ENCODE measurements at regions of chr5 and their contacts with region 1.

Region 1: DNA sequence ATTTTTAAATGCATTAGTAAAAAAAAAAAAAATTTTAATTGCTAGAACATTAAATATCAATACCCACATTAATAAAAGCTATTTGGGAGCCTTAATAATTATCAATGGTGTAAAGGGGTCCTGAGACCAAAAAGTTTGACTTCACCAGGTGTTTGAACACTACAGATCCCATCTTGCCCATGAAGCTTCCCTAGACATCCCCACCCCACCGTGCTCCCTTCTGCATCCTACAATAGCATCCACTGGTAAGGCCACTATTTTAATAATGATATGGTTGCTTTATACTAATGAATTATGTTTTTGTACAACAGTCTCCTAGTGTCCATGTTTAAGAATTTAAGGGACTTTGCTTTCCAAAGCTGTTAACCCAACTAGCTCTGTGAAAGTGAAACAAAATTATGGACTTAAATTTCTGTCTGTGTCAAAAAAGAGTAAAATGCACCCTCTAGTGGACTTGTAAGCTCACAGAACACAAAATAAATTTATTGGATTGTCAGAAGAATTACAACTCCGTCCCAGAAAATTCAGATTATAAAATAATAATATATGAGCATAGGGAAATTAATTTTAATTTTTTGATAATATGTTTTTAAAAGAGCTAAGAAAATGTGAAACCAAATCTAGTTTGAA is 76.0 kb downstream of the ARL15 start:
- DNase-seq: no peak
- ATAC-seq: no peak
- H3K4me3 ChIP-seq: no peak overlapping the region
- H3K27ac ChIP-seq: no peak overlapping the region
- H3K4me1 ChIP-seq: no peaks in the 10 kb centered on the region
- H3K27me3 ChIP-seq: no peaks in the 10 kb centered on the region
- CTCF ChIP-seq: peak; percentile 67

Region 2: DNA sequence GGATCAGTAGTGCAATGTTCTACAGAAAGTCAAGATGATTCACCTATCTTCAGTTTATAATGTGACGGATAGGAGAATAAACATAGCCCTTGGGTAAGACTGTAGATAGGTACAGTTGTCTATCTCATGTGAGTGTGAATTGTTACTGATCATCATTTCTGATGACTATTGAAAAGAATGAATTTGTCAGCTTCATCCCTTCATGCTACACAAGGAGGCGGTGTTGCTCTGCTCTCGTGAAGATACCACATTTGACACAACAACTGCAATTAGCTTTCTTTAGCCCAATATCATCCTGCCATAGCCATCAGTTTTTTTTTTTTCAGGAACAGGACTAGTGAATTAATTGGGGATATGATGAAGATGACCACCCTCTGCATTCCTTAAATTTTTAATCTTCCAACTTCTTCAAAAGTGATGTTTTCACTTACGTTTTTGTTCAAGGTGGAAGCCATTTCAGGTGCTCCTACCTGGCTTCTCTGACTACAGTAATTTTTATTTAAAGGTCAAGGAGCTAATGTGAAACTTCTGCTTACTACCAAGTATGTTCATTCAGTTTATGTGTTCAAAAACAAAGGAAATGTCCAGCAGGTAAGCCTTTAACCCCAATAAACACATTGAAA is 972.0 kb before region 1 on chr5:
- CTCF ChIA-PET with region 1: no interaction called
- POLR2A ChIA-PET with region 1: no interaction called
- in situ Hi-C with region 1: no loop called
- intact Hi-C with region 1: loop called (anchors 5 kb)
- DNase-seq: no peak
- ATAC-seq: no peak
- H3K4me3 ChIP-seq: no peak overlapping the region
- H3K27ac ChIP-seq: no peak overlapping the region
- H3K4me1 ChIP-seq: no peaks in the 10 kb centered on the region
- H3K27me3 ChIP-seq: no peaks in the 10 kb centered on the region
- CTCF ChIP-seq: peak; percentile 53; the same call in 1 of the 2 replicates

Region 3: GRCh38 chr5:54066433-54066832 is 168.0 kb before region 1 on chr5:
- CTCF ChIA-PET with region 1: no interaction called
- POLR2A ChIA-PET with region 1: no interaction called
- in situ Hi-C with region 1: no loop called
- intact Hi-C with region 1: no loop called
- DNase-seq: no peak
- ATAC-seq: no peak
- H3K4me3 ChIP-seq: no peak overlapping the region
- H3K27ac ChIP-seq: no peak overlapping the region
- H3K4me1 ChIP-seq: no peaks in the 10 kb centered on the region
- H3K27me3 ChIP-seq: no peaks in the 10 kb centered on the region
- CTCF ChIP-seq: peak; percentile 5; the same call in 1 of the 2 replicates

Region 4: GRCh38 chr5:54249210-54250028 is 15.0 kb after region 1 on chr5:
- CTCF ChIA-PET with region 1: no interaction called
- POLR2A ChIA-PET with region 1: no interaction called
- in situ Hi-C with region 1: no loop called
- intact Hi-C with region 1: no loop called
- DNase-seq: no peak
- ATAC-seq: no peak
- H3K4me3 ChIP-seq: no peak overlapping the region
- H3K27ac ChIP-seq: no peak overlapping the region
- H3K4me1 ChIP-seq: no peaks in the 10 kb centered on the region
- H3K27me3 ChIP-seq: no peaks in the 10 kb centered on the region
- CTCF ChIP-seq: no peak

Region 5: GRCh38 chr5:54390015-54390414 is 155.6 kb after region 1 on chr5:
- CTCF ChIA-PET with region 1: no interaction called
- POLR2A ChIA-PET with region 1: no interaction called
- in situ Hi-C with region 1: no loop called
- intact Hi-C with region 1: no loop called
- DNase-seq: peak; percentile 39
- ATAC-seq: no peak
- H3K4me3 ChIP-seq: no peak overlapping the region
- H3K27ac ChIP-seq: no peak overlapping the region
- H3K4me1 ChIP-seq: no peaks in the 10 kb centered on the region
- H3K27me3 ChIP-seq: no peaks in the 10 kb centered on the region
- CTCF ChIP-seq: no peak

Measured in Panc1 (cell line).